B cell (primary cell): ENCODE measurements at regions of chr2 and their contacts with region 1.

Region 1: GRCh38 chr2:43131024-43131889 is 95.1 kb downstream of the ZFP36L2 start:
- DNase-seq: peak; percentile 90
- ATAC-seq: peak; percentile 54
- H3K4me3 ChIP-seq: peak overlapping the region in 1 of 5 experiments; percentile 19
- H3K4me3 Mint-ChIP-seq: peak overlapping the region; percentile 55
- H3K27ac ChIP-seq: peak overlapping the region; percentile 87 to 89
- H3K27ac Mint-ChIP-seq: peak overlapping the region; percentile 83
- H3K4me1 ChIP-seq: peaks cover 89 to 100% of the 10 kb centered on the region in 2 donors
- H3K4me1 Mint-ChIP-seq: peaks cover 92% of the 10 kb centered on the region
- H3K27me3 ChIP-seq: peaks cover 0 to 2% (median 0%) of the 10 kb centered on the region in 4 experiments
- H3K27me3 Mint-ChIP-seq: no peaks in the 10 kb centered on the region
- CTCF ChIP-seq: peak; percentile 69

Region 2: DNA sequence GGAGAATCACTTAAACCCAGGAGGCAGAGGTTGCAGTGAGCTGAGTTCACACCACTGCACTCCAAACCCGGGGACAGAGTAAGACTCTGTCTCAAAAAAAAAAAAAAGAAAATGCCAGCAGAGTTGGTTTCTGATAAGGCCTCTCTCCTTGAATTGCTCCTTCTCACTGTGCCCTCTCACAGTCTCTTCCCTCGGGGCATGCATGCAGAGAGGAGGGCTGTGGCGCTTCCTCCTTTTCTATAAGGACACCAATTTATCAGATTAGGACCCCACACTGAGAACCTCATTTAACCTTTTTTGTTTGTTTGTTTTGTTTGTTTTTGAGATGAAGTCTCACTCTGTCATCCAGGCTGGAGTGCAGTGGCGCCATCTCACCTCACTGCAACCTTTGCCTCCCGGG is 15.4 kb before region 1 on chr2:
- CTCF ChIA-PET with region 1: interaction called, 28 read pairs
- POLR2A ChIA-PET with region 1: interaction called, 4 read pairs
- intact Hi-C with region 1: no loop called
- DNase-seq: no peak
- ATAC-seq: no peak
- H3K4me3 ChIP-seq: no peak overlapping the region
- H3K4me3 Mint-ChIP-seq: no peak overlapping the region
- H3K27ac ChIP-seq: no peak overlapping the region
- H3K27ac Mint-ChIP-seq: no peak overlapping the region
- H3K4me1 ChIP-seq: peaks cover 0 to 1% of the 10 kb centered on the region in 2 donors
- H3K4me1 Mint-ChIP-seq: no peaks in the 10 kb centered on the region
- H3K27me3 ChIP-seq: no peaks in the 10 kb centered on the region
- H3K27me3 Mint-ChIP-seq: peaks cover 4% of the 10 kb centered on the region
- CTCF ChIP-seq: no peak

Region 3: DNA sequence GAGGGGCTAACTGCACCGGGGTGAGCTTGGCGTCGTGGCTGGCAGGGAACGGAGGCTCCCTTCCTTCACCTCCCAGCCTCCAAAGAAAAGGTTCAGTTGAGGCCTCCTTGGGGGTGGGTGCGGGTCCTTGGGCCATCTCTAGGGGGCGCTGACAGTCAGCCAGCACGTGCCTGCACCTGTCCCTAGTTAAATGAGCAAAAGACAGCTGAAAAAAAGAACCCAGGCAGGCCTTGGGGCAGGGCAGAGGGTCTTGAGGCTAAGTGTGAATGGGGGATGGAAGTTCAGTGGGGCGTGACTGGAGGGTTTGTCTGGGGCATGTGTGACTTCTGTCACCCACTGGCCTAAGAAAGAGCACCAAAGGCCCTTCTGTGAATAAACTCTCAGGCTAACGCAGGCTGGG is 38.7 kb after region 1 on chr2:
- CTCF ChIA-PET with region 1: interaction called, 87 read pairs
- POLR2A ChIA-PET with region 1: interaction called, 108 read pairs
- intact Hi-C with region 1: loop called (anchors 1 kb)
- DNase-seq: peak; percentile 59
- ATAC-seq: no peak
- H3K4me3 ChIP-seq: peak overlapping the region in 3 of 5 experiments; percentile 2 to 53 (median 35)
- H3K4me3 Mint-ChIP-seq: peak overlapping the region; percentile 87
- H3K27ac ChIP-seq: peak overlapping the region; percentile 85 to 91
- H3K27ac Mint-ChIP-seq: peak overlapping the region; percentile 100
- H3K4me1 ChIP-seq: peaks cover 69 to 84% of the 10 kb centered on the region in 2 donors
- H3K4me1 Mint-ChIP-seq: peaks cover 79% of the 10 kb centered on the region
- H3K27me3 ChIP-seq: no peaks in the 10 kb centered on the region
- H3K27me3 Mint-ChIP-seq: no peaks in the 10 kb centered on the region
- CTCF ChIP-seq: peak; percentile 46

Region 4: GRCh38 chr2:43194121-43194869 is 63.0 kb after region 1 on chr2:
- CTCF ChIA-PET with region 1: interaction called, 10 read pairs
- POLR2A ChIA-PET with region 1: interaction called, 17 read pairs
- intact Hi-C with region 1: loop called (anchors 1 kb)
- DNase-seq: no peak
- ATAC-seq: no peak
- H3K4me3 ChIP-seq: no peak overlapping the region
- H3K4me3 Mint-ChIP-seq: peak overlapping the region; percentile 40
- H3K27ac ChIP-seq: peak overlapping the region; percentile 78 to 89
- H3K27ac Mint-ChIP-seq: peak overlapping the region; percentile 85
- H3K4me1 ChIP-seq: peaks cover 40 to 64% of the 10 kb centered on the region in 2 donors
- H3K4me1 Mint-ChIP-seq: peaks cover 43% of the 10 kb centered on the region
- H3K27me3 ChIP-seq: no peaks in the 10 kb centered on the region
- H3K27me3 Mint-ChIP-seq: no peaks in the 10 kb centered on the region
- CTCF ChIP-seq: no peak

Region 5: GRCh38 chr2:43239981-43240761 is 108.9 kb after region 1 on chr2:
- CTCF ChIA-PET with region 1: interaction called, 650 read pairs
- POLR2A ChIA-PET with region 1: interaction called, 6 read pairs
- intact Hi-C with region 1: no loop called
- DNase-seq: peak; percentile 59
- ATAC-seq: peak; percentile 87
- H3K4me3 ChIP-seq: peak overlapping the region in 1 of 5 experiments; percentile 17
- H3K4me3 Mint-ChIP-seq: peak overlapping the region; percentile 67
- H3K27ac ChIP-seq: peak overlapping the region; percentile 63 to 89
- H3K27ac Mint-ChIP-seq: peak overlapping the region; percentile 97
- H3K4me1 ChIP-seq: peaks cover 26 to 37% of the 10 kb centered on the region in 2 donors
- H3K4me1 Mint-ChIP-seq: peaks cover 48% of the 10 kb centered on the region
- H3K27me3 ChIP-seq: no peaks in the 10 kb centered on the region
- H3K27me3 Mint-ChIP-seq: no peaks in the 10 kb centered on the region
- CTCF ChIP-seq: no peak